Activated CD4-positive, alpha-beta T cell treated with anti-CD3 and anti-CD28 coated beads, Interleukin-2, amount 10 ng/mL, durations not matched to agents 24 days and 14 days (primary cell): ENCODE measurements at regions of chr22 and their contacts with region 1.

Region 1: GRCh38 chr22:31661851-31662656 is at the start of gene PISD:
- DNase-seq: peak; percentile 99
- H3K4me3 Mint-ChIP-seq: peak within 1 kb of the TSS; percentile 98
- H3K27ac Mint-ChIP-seq: peak within 1 kb of the TSS; percentile 100
- H3K4me1 Mint-ChIP-seq: peaks cover 27% of the 10 kb centered on the region
- H3K27me3 Mint-ChIP-seq: peaks cover 4% of the 10 kb centered on the region
- total RNA-seq, gene PISD: 44.9 and 52.1 TPM in 2 replicates

Region 2: GRCh38 chr22:31646186-31647089 is 15.6 kb before region 1 on chr22:
- intact Hi-C with region 1: loop called (anchors 1 kb)
- DNase-seq: peak; percentile 63
- H3K4me3 Mint-ChIP-seq: peak overlapping the region; percentile 19
- H3K27ac Mint-ChIP-seq: peak overlapping the region; percentile 72
- H3K4me1 Mint-ChIP-seq: peaks cover 20% of the 10 kb centered on the region
- H3K27me3 Mint-ChIP-seq: no peaks in the 10 kb centered on the region

Region 3: GRCh38 chr22:31749636-31750364 is 87.7 kb after region 1 on chr22 and contains the start of gene PRR14L:
- intact Hi-C with region 1: loop called (anchors 1 kb)
- DNase-seq: peak; percentile 100
- H3K4me3 Mint-ChIP-seq: peak within 1 kb of the TSS; percentile 99
- H3K27ac Mint-ChIP-seq: peak within 1 kb of the TSS; percentile 96
- H3K4me1 Mint-ChIP-seq: peaks cover 48% of the 10 kb centered on the region
- H3K27me3 Mint-ChIP-seq: peaks cover 2% of the 10 kb centered on the region
- total RNA-seq, gene PRR14L: 61.0 and 63.6 TPM in 2 replicates

Region 4: DNA sequence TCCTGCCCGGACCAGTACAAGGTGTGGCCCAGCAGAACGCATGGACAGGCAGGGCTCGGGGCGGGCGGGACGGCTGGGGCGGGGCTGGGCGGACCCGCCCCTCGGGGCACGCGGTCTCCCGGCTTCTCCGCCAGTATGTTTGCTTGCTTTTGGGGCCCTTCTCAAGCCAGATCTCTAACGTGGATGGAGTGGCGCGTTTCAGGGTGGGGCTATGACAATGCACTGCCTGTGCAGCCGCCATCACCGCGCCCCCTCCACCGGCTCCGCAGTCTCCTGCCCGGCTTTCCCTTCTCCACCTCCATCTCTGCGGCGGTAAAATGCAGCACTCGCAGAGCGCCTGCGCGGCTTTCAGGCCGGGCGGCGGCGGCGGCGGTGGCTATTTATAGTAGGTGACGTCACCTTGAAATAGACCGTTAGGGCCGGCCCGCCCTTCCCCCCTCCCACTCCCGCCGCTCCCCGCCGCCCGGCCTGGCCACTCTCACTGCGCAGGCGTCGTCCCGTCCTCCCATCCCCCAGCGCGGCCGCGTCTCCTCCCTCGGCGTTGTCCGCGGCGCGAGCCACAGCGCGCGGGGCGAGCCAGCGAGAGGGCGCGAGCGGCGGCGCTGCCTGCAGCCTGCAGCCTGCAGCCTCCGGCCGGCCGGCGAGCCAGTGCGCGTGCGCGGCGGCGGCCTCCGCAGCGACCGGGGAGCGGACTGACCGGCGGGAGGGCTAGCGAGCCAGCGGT is 282.1 kb after region 1 on chr22 and contains the start of gene YWHAH:
- intact Hi-C with region 1: loop called (anchors 1 kb)
- DNase-seq: peak; percentile 96
- H3K4me3 Mint-ChIP-seq: no peak within 1 kb of the TSS
- H3K27ac Mint-ChIP-seq: peak within 1 kb of the TSS; percentile 98
- H3K4me1 Mint-ChIP-seq: peaks cover 21% of the 10 kb centered on the region
- H3K27me3 Mint-ChIP-seq: no peaks in the 10 kb centered on the region
- total RNA-seq, gene YWHAH: 138 and 141 TPM in 2 replicates

Region 5: GRCh38 chr22:31970490-31971444 is 308.7 kb after region 1 on chr22:
- intact Hi-C with region 1: loop called (anchors 1 kb)
- DNase-seq: peak; percentile 98
- H3K4me3 Mint-ChIP-seq: peak overlapping the region; percentile 84
- H3K27ac Mint-ChIP-seq: peak overlapping the region; percentile 47
- H3K4me1 Mint-ChIP-seq: peaks cover 11% of the 10 kb centered on the region
- H3K27me3 Mint-ChIP-seq: peaks cover 2% of the 10 kb centered on the region

Region 6: DNA sequence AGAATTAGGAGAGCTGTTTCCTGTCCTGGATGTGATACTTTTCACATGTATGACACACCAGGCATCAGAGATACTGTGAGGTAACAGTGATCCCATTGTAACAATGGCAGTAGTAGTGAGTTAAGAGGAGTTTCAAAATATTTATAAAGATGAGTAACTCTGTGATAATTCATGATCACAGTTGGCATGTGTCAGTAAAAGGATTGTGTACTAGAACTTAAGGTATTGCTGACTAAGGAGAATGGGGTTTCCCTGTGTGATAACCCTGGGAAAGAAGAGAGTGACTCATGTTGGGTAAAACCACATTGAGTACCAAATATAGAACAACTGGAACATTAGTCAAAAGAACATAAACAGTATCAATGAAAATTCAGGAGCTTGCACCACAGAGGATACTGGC is 358.1 kb after region 1 on chr22:
- intact Hi-C with region 1: no loop called
- DNase-seq: no peak
- H3K4me3 Mint-ChIP-seq: no peak overlapping the region
- H3K27ac Mint-ChIP-seq: no peak overlapping the region
- H3K4me1 Mint-ChIP-seq: peaks cover 13% of the 10 kb centered on the region
- H3K27me3 Mint-ChIP-seq: peaks cover 33% of the 10 kb centered on the region